PC-3 (cell line): ENCODE measurements at regions of chr11 and their contacts with region 1.

Region 1: GRCh38 chr11:108414958-108415357 is 52.4 kb downstream of the C11orf65 start:
- DNase-seq: no peak
- ATAC-seq: no peak
- H3K4me3 ChIP-seq: no peak overlapping the region
- H3K27ac ChIP-seq: no peak overlapping the region
- H3K4me1 ChIP-seq: no peaks in the 10 kb centered on the region
- H3K27me3 ChIP-seq: no peaks in the 10 kb centered on the region
- CTCF ChIP-seq: no peak

Region 2: DNA sequence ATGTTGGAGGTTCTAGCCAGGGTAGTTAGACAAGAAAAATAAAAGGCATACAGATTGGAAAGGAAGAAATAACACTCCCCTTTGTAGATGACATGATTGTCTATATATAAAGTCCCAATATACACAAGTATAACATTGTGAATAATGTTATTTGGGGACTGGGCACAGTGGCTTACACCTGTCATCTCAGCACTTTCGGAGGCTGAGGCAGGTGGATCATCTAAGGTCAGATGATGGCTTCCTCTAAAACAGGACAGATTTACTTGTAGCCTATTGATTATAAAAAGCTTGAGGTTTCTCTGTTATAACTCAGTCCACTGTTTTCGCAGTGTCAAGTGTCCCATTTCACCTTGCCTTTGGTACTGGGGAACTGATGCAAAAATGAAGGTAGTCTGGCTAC is 172.5 kb before region 1 on chr11:
- CTCF ChIA-PET with region 1: no interaction called
- POLR2A ChIA-PET with region 1: no interaction called
- intact Hi-C with region 1: no loop called
- DNase-seq: no peak
- ATAC-seq: no peak
- H3K4me3 ChIP-seq: no peak overlapping the region
- H3K27ac ChIP-seq: no peak overlapping the region
- H3K4me1 ChIP-seq: no peaks in the 10 kb centered on the region
- H3K27me3 ChIP-seq: no peaks in the 10 kb centered on the region
- CTCF ChIP-seq: no peak

Region 3: DNA sequence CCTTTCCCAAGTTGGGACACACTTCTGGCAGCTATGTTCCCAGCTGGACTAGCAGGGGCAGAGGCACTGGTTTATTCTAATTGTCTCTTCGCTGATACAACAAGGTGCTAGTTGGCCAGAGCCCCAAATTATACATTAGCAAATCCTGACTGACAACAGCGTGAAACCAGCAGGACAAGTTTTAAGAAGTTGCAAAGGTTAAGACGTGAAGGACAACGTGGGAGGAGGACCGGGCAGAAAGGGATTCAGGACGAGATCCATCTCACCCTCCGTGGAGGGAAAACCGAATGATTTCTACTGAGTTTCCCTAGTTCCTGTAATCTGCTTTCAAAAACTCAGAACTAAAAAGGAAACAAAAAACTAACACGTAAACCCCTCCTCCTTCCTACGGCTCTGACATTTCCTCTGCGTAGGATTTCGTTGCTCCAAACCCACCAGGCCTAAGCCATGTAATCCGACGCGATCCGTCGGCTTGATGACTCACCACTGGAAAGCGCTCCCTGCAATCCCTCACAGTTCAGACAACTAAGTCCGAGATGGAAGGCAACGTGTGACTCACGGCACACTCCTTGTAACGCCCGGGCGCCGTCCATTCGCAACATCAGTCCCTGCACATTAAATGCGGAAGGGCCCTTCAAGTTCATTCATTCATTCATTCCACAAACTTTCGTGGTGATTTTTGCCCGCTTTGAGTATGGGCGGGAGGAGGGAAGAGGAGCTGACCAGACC is 82.5 kb after region 1 on chr11:
- CTCF ChIA-PET with region 1: no interaction called
- POLR2A ChIA-PET with region 1: no interaction called
- intact Hi-C with region 1: loop called (anchors 5 kb)
- DNase-seq: peak; percentile 99
- ATAC-seq: peak; percentile 92
- H3K4me3 ChIP-seq: peak overlapping the region; percentile 68
- H3K27ac ChIP-seq: peak overlapping the region; percentile 87
- H3K4me1 ChIP-seq: peaks cover 29% of the 10 kb centered on the region
- H3K27me3 ChIP-seq: no peaks in the 10 kb centered on the region
- CTCF ChIP-seq: no peak